HEK293 (cell line): ENCODE measurements at regions of chr1 and their contacts with region 1.

Region 1: GRCh38 chr1:224851210-224851847 is 78.1 kb upstream of the DNAH14 start:
- H3K4me3 ChIP-seq: no peak overlapping the region
- H3K27ac ChIP-seq: no peak overlapping the region
- H3K4me1 ChIP-seq: no peaks in the 10 kb centered on the region
- CTCF ChIP-seq: peak; percentile 83

Region 2: DNA sequence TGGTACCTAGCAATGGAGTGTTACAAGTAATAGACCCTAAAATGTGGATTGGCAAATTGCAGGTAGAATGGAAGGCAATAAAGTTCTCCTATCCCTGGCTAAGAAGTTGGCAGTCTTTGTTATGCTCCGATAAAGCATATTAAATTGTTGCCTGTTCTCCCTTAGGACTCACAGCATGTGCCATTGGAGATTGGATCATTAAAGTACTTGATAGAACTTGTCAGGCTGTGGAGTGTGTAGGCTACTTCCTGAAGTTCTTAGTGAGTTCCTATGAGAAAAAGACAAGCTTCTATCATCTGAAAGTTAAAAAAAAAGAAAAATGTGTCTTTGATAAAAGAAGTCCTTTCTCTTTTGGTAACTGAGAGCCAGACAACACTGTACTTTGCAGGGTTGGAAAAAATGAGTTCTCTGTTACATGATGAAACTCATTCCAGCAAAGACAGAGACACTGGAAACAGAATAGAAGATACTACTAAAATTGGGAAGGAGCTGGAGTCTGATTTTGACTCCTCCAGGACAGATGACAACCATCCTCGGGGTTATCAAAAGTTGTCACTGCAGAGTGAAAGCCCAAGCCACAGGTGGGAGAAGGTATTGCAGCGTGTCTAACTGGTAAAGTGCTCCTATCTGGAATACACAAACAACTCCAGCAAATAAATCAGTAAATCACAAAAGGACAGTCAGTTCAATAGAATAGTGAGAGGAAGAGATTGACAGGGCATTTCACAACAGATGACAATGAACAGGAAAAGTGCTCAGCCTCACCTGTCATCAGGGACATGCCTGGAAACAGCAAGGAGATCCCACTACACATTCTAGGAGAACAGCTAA is 329.2 kb before region 1 on chr1:
- CTCF ChIA-PET with region 1: interaction called, 273 read pairs
- POLR2A ChIA-PET with region 1: no interaction called
- H3K4me3 ChIP-seq: no peak overlapping the region
- H3K27ac ChIP-seq: no peak overlapping the region
- H3K4me1 ChIP-seq: no peaks in the 10 kb centered on the region; the same call in 1 of the 2 replicates
- CTCF ChIP-seq: 0 out of 2 replicates have a peak, but pooled peaks have one; percentile 24

Region 3: DNA sequence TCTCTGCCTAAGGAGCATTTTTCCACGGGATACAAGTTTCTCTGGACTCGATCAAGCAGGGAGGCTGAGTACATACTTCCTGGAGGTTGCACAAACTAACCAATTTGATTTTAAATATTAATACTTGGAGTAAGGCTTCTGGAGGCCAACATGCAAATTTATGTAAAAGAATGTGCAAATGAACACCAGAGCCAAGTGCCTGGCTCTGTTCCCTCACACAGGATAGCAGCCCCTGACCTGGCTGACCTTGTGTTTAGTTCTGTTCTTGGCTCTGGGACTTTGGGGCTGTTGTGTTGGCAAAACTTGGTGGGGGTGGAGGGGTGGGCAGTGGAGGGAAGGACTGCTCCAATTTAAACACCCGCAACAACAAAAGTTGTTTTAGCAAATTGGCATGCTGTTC is 201.0 kb before region 1 on chr1:
- CTCF ChIA-PET with region 1: interaction called, 11 read pairs
- POLR2A ChIA-PET with region 1: no interaction called
- H3K4me3 ChIP-seq: no peak overlapping the region
- H3K27ac ChIP-seq: no peak overlapping the region
- H3K4me1 ChIP-seq: no peaks in the 10 kb centered on the region
- CTCF ChIP-seq: no peak

Region 4: DNA sequence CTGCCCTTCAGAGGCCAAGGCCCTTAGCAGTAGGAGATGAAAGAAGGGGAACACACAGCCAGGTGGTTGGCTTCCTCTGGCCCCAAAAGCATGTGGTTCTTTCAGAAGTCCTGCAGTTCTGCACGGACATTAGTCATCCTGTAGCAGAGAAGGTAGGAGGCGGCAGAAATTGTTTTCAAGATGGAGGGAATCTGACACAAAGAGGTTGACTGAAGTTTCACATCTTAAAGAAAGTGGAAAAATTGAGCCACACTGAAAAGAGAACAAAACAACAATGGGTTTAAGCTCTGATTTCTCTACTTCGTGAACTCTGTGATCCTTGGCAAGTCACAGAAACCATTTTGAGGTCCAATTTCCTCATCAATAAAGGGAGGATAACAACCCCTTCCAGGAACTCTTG is 47.1 kb before region 1 on chr1:
- CTCF ChIA-PET with region 1: interaction called, 17 read pairs
- POLR2A ChIA-PET with region 1: no interaction called
- H3K4me3 ChIP-seq: no peak overlapping the region
- H3K27ac ChIP-seq: no peak overlapping the region
- H3K4me1 ChIP-seq: 0 out of 2 replicates have a peak, but pooled peaks cover 3% of the 10 kb centered on the region
- CTCF ChIP-seq: no peak

Region 5: DNA sequence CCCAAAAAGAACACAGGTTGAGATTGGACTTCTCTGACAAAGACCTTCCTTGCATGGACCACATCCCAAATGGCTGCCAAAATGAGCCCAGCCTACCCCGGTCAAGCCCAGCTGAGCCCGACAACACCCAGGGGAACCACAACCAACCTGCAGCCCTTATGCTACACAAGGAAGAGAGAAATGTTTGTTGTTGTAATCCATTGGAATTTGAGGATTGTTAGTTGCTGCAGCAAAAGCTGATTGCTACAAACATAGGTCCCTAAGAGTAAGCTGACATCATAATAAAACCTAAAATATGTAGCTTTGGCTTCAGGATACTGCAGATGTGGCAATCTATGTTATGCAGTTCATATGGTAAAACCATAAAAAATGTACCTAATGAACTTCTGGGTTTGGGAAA is 12.6 kb after region 1 on chr1:
- CTCF ChIA-PET with region 1: interaction called, 75 read pairs
- POLR2A ChIA-PET with region 1: no interaction called
- H3K4me3 ChIP-seq: no peak overlapping the region
- H3K27ac ChIP-seq: no peak overlapping the region
- H3K4me1 ChIP-seq: no peaks in the 10 kb centered on the region
- CTCF ChIP-seq: no peak

Region 6: DNA sequence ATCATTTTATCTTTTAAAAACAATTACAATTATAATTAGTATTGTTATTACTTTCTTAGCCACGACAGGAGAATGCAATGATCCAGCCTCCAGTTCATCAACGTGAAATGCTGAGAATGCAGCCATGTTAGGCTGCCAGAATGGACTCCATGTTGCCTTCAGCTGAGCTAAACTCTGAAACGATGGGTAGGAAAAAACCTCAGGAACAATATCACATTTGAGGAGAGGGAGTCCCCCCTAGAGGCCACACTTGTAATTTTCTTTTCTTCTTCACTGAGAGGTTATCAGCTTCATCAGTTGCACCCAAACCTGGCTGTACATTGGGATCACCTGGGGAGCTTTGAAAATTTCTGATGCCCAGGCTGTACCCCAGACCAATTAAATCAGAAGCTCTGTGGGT is 43.6 kb after region 1 on chr1:
- CTCF ChIA-PET with region 1: interaction called, 67 read pairs
- POLR2A ChIA-PET with region 1: no interaction called
- H3K4me3 ChIP-seq: no peak overlapping the region
- H3K27ac ChIP-seq: no peak overlapping the region
- H3K4me1 ChIP-seq: no peaks in the 10 kb centered on the region
- CTCF ChIP-seq: peak; percentile 38; the same call in 1 of the 2 replicates

Region 7: GRCh38 chr1:225004396-225004795 is 153.1 kb after region 1 on chr1:
- CTCF ChIA-PET with region 1: no interaction called
- POLR2A ChIA-PET with region 1: no interaction called
- H3K4me3 ChIP-seq: no peak overlapping the region
- H3K27ac ChIP-seq: no peak overlapping the region
- H3K4me1 ChIP-seq: no peaks in the 10 kb centered on the region
- CTCF ChIP-seq: no peak

Region 8: DNA sequence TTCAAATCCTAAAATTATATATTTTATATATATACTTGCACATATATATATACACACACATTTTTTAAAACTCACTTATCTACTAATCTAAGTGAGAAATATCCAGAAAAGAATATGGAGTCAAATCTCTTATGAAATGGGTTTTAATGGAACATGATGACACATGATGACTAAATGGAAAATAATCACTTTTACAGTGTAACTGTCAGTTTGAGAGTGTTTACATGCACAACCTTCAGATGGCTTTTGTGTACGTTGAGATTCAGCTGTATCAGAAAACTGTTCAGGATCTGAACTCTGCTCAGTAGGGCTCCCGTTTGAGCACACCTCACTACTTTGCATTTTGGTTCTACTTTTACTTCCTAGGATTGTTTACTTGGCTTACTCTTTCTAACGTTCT is 268.0 kb after region 1 on chr1:
- CTCF ChIA-PET with region 1: no interaction called
- POLR2A ChIA-PET with region 1: no interaction called
- H3K4me3 ChIP-seq: no peak overlapping the region
- H3K27ac ChIP-seq: no peak overlapping the region
- H3K4me1 ChIP-seq: no peaks in the 10 kb centered on the region
- CTCF ChIP-seq: no peak

Region 9: GRCh38 chr1:225137981-225138380 is 286.7 kb after region 1 on chr1:
- CTCF ChIA-PET with region 1: no interaction called
- POLR2A ChIA-PET with region 1: no interaction called
- H3K4me3 ChIP-seq: no peak overlapping the region
- H3K27ac ChIP-seq: no peak overlapping the region
- H3K4me1 ChIP-seq: no peaks in the 10 kb centered on the region
- CTCF ChIP-seq: no peak

Region 10: DNA sequence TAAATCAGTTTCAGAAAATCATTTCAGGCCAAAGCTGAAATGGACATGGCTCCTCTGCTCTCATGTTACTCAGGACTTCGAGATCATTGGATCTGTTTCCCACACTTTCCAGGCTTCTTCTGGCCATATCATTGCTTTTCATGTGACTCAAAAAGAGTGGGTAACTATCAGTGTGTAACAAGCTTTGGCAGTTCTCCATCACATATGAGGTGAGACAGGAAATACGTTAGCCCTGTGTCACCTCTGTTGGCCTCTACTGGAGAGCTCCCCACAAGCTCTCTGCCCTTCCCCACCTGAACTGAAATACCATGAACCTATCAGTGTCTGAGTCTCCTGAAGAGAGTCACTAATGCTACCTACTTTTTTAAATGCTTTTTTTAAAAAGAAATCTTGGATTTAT is 448.3 kb after region 1 on chr1:
- CTCF ChIA-PET with region 1: no interaction called
- POLR2A ChIA-PET with region 1: no interaction called
- H3K4me3 ChIP-seq: no peak overlapping the region
- H3K27ac ChIP-seq: no peak overlapping the region
- H3K4me1 ChIP-seq: no peaks in the 10 kb centered on the region
- CTCF ChIP-seq: no peak